ENCODE measurements at regions of chr21 and their contacts with region 1.

Region 1: DNA sequence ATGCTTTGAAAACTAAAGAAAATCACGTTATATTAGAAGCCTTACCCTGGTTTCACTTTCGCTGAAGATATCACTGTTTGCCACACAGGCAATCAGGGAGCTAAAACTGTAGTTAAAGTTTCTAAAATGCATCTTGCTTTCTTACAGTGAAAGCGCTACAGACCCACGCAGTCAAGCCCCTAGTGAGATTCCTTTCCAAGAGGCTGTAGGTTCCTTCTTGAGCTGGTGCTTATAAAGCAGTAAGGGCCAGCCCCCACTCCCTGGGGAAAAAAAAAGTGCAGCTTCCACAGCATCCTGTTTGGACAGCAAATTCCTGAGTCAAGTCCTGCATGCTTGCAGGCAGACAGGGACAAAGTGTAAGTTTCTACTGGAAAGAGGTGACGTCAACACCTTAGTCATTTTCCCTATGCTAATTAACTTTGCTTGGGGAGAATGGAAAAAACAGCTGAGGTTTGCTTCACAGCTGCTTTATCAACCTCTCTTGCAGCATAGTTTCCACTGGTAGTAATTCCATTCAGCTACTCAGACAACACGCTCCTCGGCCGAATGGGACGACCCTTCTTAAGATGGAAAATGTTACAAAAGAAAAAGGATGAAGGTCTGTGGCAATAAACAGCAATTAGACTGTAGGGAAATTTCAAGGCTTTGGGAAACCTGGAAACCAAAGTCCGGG is 14.7 kb upstream of the KCNE1 start:
- DNase-seq: peak; percentile 63
- H3K4me3 Mint-ChIP-seq: peak overlapping the region; percentile 69
- H3K27ac Mint-ChIP-seq: peak overlapping the region; percentile 94
- H3K4me1 Mint-ChIP-seq: peaks cover 30% of the 10 kb centered on the region
- H3K27me3 Mint-ChIP-seq: no peaks in the 10 kb centered on the region

Region 2: GRCh38 chr21:34546542-34546941 is 19.8 kb after region 1 on chr21:
- intact Hi-C with region 1: loop called (anchors 2 kb)
- DNase-seq: no peak
- H3K4me3 Mint-ChIP-seq: no peak overlapping the region
- H3K27ac Mint-ChIP-seq: peak overlapping the region; percentile 11
- H3K4me1 Mint-ChIP-seq: peaks cover 18% of the 10 kb centered on the region
- H3K27me3 Mint-ChIP-seq: no peaks in the 10 kb centered on the region

Region 3: GRCh38 chr21:34642211-34643075 is 115.7 kb after region 1 on chr21:
- intact Hi-C with region 1: loop called (anchors 5 kb)
- DNase-seq: no peak
- H3K4me3 Mint-ChIP-seq: no peak overlapping the region
- H3K27ac Mint-ChIP-seq: no peak overlapping the region
- H3K4me1 Mint-ChIP-seq: peaks cover 24% of the 10 kb centered on the region
- H3K27me3 Mint-ChIP-seq: no peaks in the 10 kb centered on the region

Measured in activated CD4-positive, alpha-beta T cell treated with anti-CD3 and anti-CD28 coated beads, Interleukin-2, amount 10 ng/mL, durations not matched to agents 24 days and 14 days (primary cell).